ENCODE measurements at regions of chr9 and their contacts with region 1.

Region 1: DNA sequence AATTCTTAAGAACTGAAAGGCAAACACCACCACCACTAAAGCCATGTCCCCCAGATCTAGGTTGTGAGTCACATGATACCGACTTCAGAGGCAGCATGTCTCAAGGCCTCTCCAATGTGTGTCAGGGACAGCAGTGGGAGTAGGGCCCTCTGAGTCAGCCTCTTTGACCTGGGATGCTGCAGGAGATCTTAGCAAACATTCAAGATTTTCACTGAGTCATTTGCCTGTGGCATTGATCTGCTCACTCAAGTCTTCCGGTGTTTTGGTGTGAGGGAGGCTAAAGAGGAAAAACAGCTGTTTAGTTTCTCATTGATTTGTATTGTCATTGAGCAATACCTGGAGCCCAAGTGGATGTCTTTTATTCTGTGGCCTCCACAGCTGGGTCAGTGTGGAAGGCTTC is 36.1 kb downstream of the TMC1 start:
- DNase-seq: peak; percentile 77 to 99
- H3K4me3 ChIP-seq: no peak overlapping the region
- H3K27ac ChIP-seq: peak overlapping the region; percentile 92
- H3K4me1 ChIP-seq: peaks cover 80% of the 10 kb centered on the region
- H3K27me3 ChIP-seq: no peaks in the 10 kb centered on the region
- CTCF ChIP-seq: no peak

Region 2: DNA sequence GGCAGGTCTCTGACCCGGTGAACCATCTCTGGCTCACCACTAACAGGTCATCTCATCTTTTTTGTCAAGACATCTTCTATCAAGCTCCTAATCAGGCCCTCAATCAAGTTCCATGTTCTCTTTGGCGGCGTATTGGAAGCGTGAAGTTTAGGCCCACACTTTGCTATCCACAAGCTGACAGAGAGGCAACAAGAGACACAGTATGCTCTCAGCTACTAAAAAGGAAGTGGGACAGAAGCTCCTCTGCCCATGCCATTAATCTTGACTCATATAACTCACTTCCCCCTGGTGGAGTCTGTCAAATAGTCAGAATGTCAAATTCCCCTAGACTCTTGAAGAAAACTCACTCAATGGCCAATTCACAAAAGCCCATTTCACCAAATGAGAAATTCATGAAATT is 113.7 kb before region 1 on chr9:
- CTCF ChIA-PET with region 1: interaction called, 4 read pairs
- POLR2A ChIA-PET with region 1: no interaction called
- intact Hi-C with region 1: loop called (anchors 5 kb)
- DNase-seq: no peak
- H3K4me3 ChIP-seq: no peak overlapping the region
- H3K27ac ChIP-seq: peak overlapping the region; percentile 82
- H3K4me1 ChIP-seq: peaks cover 42% of the 10 kb centered on the region
- H3K27me3 ChIP-seq: no peaks in the 10 kb centered on the region
- CTCF ChIP-seq: no peak

Region 3: GRCh38 chr9:72454871-72455491 is 102.6 kb before region 1 on chr9:
- CTCF ChIA-PET with region 1: no interaction called
- POLR2A ChIA-PET with region 1: no interaction called
- intact Hi-C with region 1: no loop called
- DNase-seq: no peak
- H3K4me3 ChIP-seq: no peak overlapping the region
- H3K27ac ChIP-seq: no peak overlapping the region
- H3K4me1 ChIP-seq: peaks cover 18% of the 10 kb centered on the region; the same call in 1 of the 2 replicates
- H3K27me3 ChIP-seq: no peaks in the 10 kb centered on the region
- CTCF ChIP-seq: no peak

Region 4: GRCh38 chr9:72478966-72479365 is 78.6 kb before region 1 on chr9:
- CTCF ChIA-PET with region 1: no interaction called
- POLR2A ChIA-PET with region 1: interaction called, 3 read pairs
- intact Hi-C with region 1: loop called (anchors 1 kb)
- DNase-seq: no peak
- H3K4me3 ChIP-seq: no peak overlapping the region
- H3K27ac ChIP-seq: peak overlapping the region; percentile 94
- H3K4me1 ChIP-seq: peaks cover 47% of the 10 kb centered on the region
- H3K27me3 ChIP-seq: no peaks in the 10 kb centered on the region
- CTCF ChIP-seq: no peak

Region 5: GRCh38 chr9:72577212-72577753 is 19.7 kb after region 1 on chr9:
- CTCF ChIA-PET with region 1: interaction called, 3 read pairs
- POLR2A ChIA-PET with region 1: interaction called, 49 read pairs
- intact Hi-C with region 1: loop called (anchors 1 kb)
- DNase-seq: peak; percentile 59 to 95
- H3K4me3 ChIP-seq: peak overlapping the region; percentile 43; the same call in 1 of the 2 replicates
- H3K27ac ChIP-seq: peak overlapping the region; percentile 95
- H3K4me1 ChIP-seq: peaks cover 89% of the 10 kb centered on the region
- H3K27me3 ChIP-seq: no peaks in the 10 kb centered on the region
- CTCF ChIP-seq: no peak

Region 6: GRCh38 chr9:72827950-72828731 is 270.6 kb after region 1 on chr9:
- CTCF ChIA-PET with region 1: no interaction called
- POLR2A ChIA-PET with region 1: no interaction called
- intact Hi-C with region 1: loop called (anchors 10 kb)
- DNase-seq: peak; percentile 16 to 97
- H3K4me3 ChIP-seq: no peak overlapping the region
- H3K27ac ChIP-seq: peak overlapping the region; percentile 92
- H3K4me1 ChIP-seq: peaks cover 31% of the 10 kb centered on the region
- H3K27me3 ChIP-seq: no peaks in the 10 kb centered on the region
- CTCF ChIP-seq: no peak